ENCODE measurements at regions of chrX and their contacts with region 1.

Region 1: DNA sequence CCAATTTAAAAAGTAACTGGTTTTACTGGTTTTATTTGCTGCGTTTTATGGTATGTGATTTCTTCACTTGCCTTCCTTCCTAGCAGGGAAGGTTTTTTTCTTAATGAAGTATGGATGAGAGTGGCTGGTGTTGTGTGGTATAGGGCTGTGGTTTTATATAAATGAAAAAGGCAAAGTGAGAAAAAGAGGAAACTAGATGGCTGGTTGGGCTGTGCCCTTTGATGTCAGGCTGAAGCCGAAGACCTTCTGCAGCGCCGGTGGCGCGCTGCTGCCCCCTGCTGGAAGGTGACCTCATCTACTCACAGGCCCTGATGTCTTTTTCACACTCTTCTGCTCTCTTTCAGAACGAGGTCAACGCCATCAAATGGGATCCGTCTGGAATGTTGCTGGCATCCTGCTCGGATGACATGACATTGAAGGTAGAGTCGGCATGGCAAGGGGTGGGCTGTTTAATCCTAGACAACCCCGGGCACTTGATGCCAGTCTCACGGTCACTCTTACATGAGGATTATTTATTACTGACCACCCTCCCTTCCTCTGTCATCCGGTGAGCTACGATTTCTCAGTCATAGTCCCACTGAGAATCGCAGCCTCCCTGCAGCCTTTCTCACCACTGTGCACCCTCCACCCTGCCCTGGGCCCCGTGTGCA is 56.6 kb downstream of the GPR143 start:
- DNase-seq: peak; percentile 67
- H3K4me3 ChIP-seq: no peak overlapping the region
- H3K27ac ChIP-seq: no peak overlapping the region
- H3K4me1 ChIP-seq: no peaks in the 10 kb centered on the region
- H3K27me3 ChIP-seq: no peaks in the 10 kb centered on the region
- CTCF ChIP-seq: peak; percentile 48 to 79
- POLR2A ChIP-seq: no peak

Region 2: GRCh38 chrX:8815464-8816065 is 893.5 kb before region 1 on chrX:
- CTCF ChIA-PET with region 1: interaction called, 3 read pairs
- POLR2A ChIA-PET with region 1: no interaction called
- dilution Hi-C with region 1: no loop called
- intact Hi-C with region 1: loop called (anchors 1 kb)
- DNase-seq: peak; percentile 36
- H3K4me3 ChIP-seq: no peak overlapping the region
- H3K27ac ChIP-seq: no peak overlapping the region
- H3K4me1 ChIP-seq: no peaks in the 10 kb centered on the region
- H3K27me3 ChIP-seq: no peaks in the 10 kb centered on the region
- CTCF ChIP-seq: peak; percentile 40 to 58
- POLR2A ChIP-seq: no peak

Region 3: GRCh38 chrX:8971116-8971515 is 737.9 kb before region 1 on chrX:
- CTCF ChIA-PET with region 1: interaction called, 4 read pairs
- POLR2A ChIA-PET with region 1: no interaction called
- dilution Hi-C with region 1: no loop called
- intact Hi-C with region 1: loop called (anchors 1 kb)
- DNase-seq: peak; percentile 48
- H3K4me3 ChIP-seq: no peak overlapping the region
- H3K27ac ChIP-seq: no peak overlapping the region
- H3K4me1 ChIP-seq: no peaks in the 10 kb centered on the region
- H3K27me3 ChIP-seq: no peaks in the 10 kb centered on the region
- CTCF ChIP-seq: peak in 1 of 2 donors; percentile 27
- POLR2A ChIP-seq: no peak

Region 4: GRCh38 chrX:9312922-9313867 is 395.8 kb before region 1 on chrX:
- CTCF ChIA-PET with region 1: no interaction called
- POLR2A ChIA-PET with region 1: no interaction called
- dilution Hi-C with region 1: no loop called
- intact Hi-C with region 1: loop called (anchors 10 kb)
- DNase-seq: peak; percentile 19
- H3K4me3 ChIP-seq: no peak overlapping the region
- H3K27ac ChIP-seq: no peak overlapping the region
- H3K4me1 ChIP-seq: peaks cover 1% of the 10 kb centered on the region
- H3K27me3 ChIP-seq: no peaks in the 10 kb centered on the region
- CTCF ChIP-seq: peak; percentile 59 to 68
- POLR2A ChIP-seq: no peak

Region 5: GRCh38 chrX:9482408-9482807 is 226.6 kb before region 1 on chrX:
- CTCF ChIA-PET with region 1: no interaction called
- POLR2A ChIA-PET with region 1: no interaction called
- dilution Hi-C with region 1: no loop called
- intact Hi-C with region 1: no loop called
- DNase-seq: peak; percentile 46
- H3K4me3 ChIP-seq: no peak overlapping the region
- H3K27ac ChIP-seq: no peak overlapping the region
- H3K4me1 ChIP-seq: no peaks in the 10 kb centered on the region
- H3K27me3 ChIP-seq: no peaks in the 10 kb centered on the region
- CTCF ChIP-seq: no peak
- POLR2A ChIP-seq: no peak

Region 6: DNA sequence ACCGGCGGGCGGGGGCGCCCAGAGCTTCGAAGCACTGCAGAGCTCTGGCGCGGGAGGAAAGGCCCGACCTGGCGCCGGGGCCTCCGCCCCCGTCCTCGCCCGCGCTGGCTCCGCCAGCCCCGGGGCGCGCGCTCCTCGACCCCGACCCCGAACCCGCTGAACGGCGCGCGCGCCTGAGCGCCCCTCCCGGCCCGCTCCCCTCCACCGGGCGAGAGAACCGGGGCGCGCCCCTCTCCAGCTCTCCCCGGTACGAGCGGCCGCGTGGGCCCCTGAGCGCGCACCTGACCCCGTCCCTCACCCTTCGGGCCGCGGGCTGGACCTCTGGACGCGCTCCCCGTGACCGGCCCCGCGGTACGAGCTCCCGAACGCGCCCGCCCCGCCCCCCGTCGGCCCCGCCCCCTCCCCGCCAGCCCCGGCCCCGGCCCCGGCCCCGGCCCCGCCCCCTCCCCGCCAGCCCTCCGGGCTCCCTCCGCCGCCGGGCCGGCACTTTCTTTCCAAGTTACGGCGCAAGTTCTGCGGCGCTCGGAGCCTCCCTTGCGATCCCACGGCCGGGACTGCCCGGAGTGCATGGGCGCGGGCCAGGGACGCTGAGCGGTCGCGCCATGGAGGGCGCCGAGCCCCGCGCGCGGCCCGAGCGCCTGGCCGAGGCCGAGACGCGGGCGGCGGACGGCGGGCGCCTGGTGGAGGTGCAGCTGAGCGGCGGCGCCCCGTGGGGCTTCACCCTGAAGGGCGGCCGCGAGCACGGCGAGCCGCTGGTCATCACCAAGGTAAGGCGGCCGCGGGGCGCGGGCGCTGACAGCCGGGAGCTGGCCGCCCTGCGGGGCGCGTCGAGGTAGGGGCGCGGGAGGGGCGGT is 77.1 kb after region 1 on chrX and contains the start of gene SHROOM2:
- CTCF ChIA-PET with region 1: interaction called, 3 read pairs
- POLR2A ChIA-PET with region 1: no interaction called
- dilution Hi-C with region 1: no loop called
- intact Hi-C with region 1: loop called (anchors 5 kb)
- DNase-seq: no peak
- H3K4me3 ChIP-seq: peak within 1 kb of the TSS; percentile 18 to 83 (median 73)
- H3K27ac ChIP-seq: peak within 1 kb of the TSS; percentile 35
- H3K4me1 ChIP-seq: peaks cover 9% of the 10 kb centered on the region
- H3K27me3 ChIP-seq: no peaks in the 10 kb centered on the region
- CTCF ChIP-seq: no peak
- POLR2A ChIP-seq: no peak
- total RNA-seq, gene SHROOM2: 10.4 and 11.8 TPM in 2 replicates

Region 7: GRCh38 chrX:9865804-9866471 is 156.9 kb after region 1 on chrX:
- CTCF ChIA-PET with region 1: no interaction called
- POLR2A ChIA-PET with region 1: no interaction called
- dilution Hi-C with region 1: no loop called
- intact Hi-C with region 1: loop called (anchors 5 kb)
- DNase-seq: peak; percentile 60
- H3K4me3 ChIP-seq: no peak overlapping the region
- H3K27ac ChIP-seq: peak overlapping the region; percentile 69
- H3K4me1 ChIP-seq: peaks cover 23% of the 10 kb centered on the region
- H3K27me3 ChIP-seq: no peaks in the 10 kb centered on the region
- CTCF ChIP-seq: no peak
- POLR2A ChIP-seq: no peak

Region 8: DNA sequence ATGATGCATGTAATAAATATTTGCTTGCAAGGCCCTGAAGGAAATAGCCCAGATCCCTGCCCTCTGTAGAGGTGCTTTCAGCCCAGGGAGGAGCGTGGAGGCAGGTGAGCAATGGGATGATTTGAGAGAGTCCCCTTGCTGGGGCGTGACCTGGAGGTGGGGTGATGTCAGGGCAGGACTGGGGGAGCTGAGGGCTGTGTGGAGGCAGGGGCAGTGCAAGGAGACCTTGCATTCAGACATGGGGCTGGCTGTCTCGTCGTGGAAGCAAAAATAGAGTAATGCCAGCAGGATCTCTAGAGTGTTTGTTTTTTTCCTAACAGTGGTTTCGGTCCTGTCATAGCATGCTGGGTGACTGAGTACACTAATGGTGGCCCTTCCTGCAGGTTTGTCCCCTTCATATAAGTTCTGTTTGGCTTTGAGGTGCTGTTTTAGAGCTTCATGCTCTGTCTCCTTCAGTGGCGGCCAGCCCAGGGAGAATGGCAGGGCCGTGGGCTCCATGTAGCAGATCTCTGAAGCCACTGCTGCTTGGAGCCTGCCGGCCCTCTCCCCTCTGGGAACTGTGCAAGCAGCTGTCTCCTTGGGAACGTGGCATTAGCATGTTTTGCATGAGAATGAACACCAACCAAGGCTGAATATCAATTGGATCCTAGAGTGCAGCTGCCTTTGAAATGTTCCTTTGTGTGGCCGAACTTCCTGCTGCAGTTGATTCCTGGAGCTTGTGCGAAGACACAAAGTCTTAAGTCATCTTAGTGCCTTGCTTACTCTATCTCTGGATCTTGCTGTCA is 218.9 kb after region 1 on chrX:
- CTCF ChIA-PET with region 1: no interaction called
- POLR2A ChIA-PET with region 1: no interaction called
- dilution Hi-C with region 1: no loop called
- intact Hi-C with region 1: no loop called
- DNase-seq: no peak
- H3K4me3 ChIP-seq: no peak overlapping the region
- H3K27ac ChIP-seq: no peak overlapping the region
- H3K4me1 ChIP-seq: peaks cover 10% of the 10 kb centered on the region
- H3K27me3 ChIP-seq: no peaks in the 10 kb centered on the region
- CTCF ChIP-seq: no peak
- POLR2A ChIP-seq: no peak

Region 9: DNA sequence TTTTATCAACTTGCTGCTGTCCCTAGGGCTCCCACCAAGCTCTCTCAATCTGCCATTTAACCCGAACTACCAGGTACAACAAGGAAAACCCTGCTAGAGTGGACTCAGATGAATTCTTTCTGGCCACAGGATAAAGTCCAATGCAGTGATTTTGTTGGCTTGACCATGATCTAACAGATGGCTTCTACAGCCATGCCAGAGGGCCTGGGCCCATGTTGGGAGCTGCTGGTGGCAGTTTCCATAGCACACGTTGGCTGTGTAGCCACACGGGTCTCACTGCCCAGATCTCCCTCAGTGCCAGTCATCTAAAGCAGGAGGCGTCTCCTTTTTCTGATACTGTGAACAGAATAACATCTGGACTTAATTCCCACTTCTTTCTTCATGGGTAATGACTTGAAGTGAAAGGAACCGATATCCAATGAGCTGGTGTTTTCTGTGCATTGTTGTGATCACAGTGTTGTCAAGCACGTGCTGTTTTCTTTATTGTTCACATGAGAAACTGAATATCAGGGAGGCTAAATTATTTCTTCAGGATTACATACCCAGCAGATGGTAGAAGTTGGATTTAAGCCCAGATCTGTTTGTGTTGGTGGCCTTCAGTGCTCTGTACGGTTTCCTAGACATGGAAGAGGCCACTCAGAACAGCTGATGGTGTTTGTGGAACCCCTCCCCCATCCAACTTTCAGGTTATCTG is 362.6 kb after region 1 on chrX:
- CTCF ChIA-PET with region 1: no interaction called
- POLR2A ChIA-PET with region 1: no interaction called
- dilution Hi-C with region 1: no loop called
- intact Hi-C with region 1: no loop called
- DNase-seq: peak; percentile 38
- H3K4me3 ChIP-seq: no peak overlapping the region
- H3K27ac ChIP-seq: no peak overlapping the region
- H3K4me1 ChIP-seq: no peaks in the 10 kb centered on the region
- H3K27me3 ChIP-seq: no peaks in the 10 kb centered on the region
- CTCF ChIP-seq: no peak
- POLR2A ChIP-seq: no peak

Region 10: GRCh38 chrX:11509786-11510185 is 1800.8 kb after region 1 on chrX:
- CTCF ChIA-PET with region 1: no interaction called
- POLR2A ChIA-PET with region 1: no interaction called
- dilution Hi-C with region 1: no loop called
- intact Hi-C with region 1: no loop called
- DNase-seq: peak; percentile 52
- H3K4me3 ChIP-seq: no peak overlapping the region
- H3K27ac ChIP-seq: peak overlapping the region; percentile 61
- H3K4me1 ChIP-seq: peaks cover 13% of the 10 kb centered on the region
- H3K27me3 ChIP-seq: no peaks in the 10 kb centered on the region
- CTCF ChIP-seq: no peak
- POLR2A ChIP-seq: no peak

Measured in endothelial cell of umbilical vein (primary cell).